GM10248 (cell line): ENCODE measurements at regions of chr3 and their contacts with region 1.

Region 1: DNA sequence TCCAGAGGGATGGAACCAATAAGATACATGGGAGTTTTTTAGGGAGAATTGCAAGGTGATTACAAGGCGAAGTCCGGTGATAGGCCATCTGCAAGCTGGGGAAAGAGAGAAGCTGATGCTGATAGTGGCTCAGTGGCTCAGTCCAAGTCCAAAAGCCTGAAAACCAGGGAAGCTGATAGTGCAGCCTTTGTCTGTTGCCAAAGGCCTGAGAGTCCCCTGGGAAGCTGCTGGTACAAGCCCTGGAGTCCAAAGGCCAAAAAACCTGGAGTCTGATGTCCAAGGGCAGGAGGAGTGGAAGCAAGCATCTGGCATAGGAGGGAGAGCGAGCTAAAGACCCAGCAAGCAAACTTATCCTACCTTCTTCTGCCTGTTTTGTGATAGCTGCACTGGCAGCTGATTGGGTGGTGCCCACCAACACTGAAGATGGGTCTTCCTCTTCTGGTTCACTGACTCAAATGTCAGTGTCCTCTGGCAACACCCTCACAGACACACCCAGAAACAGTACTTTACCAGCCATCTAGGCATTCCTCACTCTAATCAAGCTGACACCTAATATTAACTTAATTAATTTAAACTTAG is 16.7 kb downstream of the TFG start:
- DNase-seq: no peak
- CTCF ChIP-seq: no peak

Region 2: GRCh38 chr3:100697172-100697571 is 28.9 kb before region 1 on chr3:
- CTCF ChIA-PET with region 1: no interaction called
- POLR2A ChIA-PET with region 1: no interaction called
- DNase-seq: no peak
- CTCF ChIP-seq: no peak

Region 3: DNA sequence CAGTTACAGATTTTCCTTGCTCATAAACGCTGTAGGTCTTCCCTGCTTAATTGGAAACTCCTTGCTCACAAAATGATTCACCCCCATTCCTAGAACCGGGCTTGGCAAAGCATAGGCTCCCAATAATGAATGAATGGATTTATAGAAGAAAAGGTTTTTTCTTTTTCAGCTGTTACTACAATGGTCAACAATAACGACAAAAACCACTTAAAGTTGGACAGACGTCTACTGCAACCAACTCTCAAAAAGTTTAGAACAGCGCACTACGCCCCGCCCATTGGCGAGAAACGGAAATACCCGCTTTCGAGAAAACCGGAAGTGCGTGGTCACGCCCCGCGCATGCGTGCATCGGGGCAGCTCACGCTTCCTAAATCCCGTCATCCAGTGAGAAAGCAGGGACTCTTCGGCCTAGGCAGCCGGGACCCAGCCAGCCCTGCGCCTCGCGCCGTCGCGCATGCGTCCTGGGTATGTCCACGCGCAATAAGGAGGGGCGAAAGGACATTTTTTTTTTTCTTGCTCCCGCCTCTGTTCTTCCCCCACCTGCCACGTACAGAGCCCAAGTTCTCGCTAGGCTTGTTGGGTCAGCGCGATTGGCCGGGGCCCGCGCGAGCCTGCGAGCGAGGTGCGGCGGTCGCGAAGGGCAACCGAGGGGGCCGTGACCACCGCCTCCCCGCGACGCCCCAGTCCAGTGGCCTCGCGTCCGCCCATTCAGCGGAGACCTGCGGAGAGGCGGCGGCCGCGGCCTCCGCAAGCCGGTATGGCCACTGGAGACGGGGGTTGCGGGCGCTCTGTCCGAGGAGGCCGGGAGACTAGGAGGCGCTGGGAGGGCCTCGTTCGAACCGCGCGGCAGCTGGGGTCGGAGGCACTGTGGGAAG is 16.8 kb before region 1 on chr3 and contains the start of gene TFG:
- CTCF ChIA-PET with region 1: interaction called, 11 read pairs
- POLR2A ChIA-PET with region 1: interaction called, 4 read pairs
- DNase-seq: peak; percentile 99
- CTCF ChIP-seq: no peak

Region 4: DNA sequence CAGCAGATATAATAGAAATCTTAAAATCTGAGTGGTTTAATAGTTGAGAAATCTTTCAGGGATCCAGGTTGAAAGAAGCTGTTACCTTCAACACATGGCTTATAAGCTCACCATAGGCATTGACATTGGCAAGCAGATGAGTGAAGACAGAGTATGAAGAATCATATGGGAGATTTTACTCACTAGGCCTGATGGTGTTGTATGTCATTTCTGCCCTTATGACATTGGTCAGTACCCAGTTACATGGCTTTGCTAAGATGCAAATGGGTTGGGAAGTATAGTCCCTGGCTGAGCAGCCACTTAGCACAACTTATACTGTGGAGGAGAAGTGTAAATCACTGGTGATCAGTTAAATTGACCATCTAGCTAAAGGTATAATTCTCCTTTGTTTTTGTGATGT is 10.8 kb before region 1 on chr3:
- CTCF ChIA-PET with region 1: interaction called, 11 read pairs
- POLR2A ChIA-PET with region 1: interaction called, 4 read pairs
- DNase-seq: no peak
- CTCF ChIP-seq: no peak

Region 5: DNA sequence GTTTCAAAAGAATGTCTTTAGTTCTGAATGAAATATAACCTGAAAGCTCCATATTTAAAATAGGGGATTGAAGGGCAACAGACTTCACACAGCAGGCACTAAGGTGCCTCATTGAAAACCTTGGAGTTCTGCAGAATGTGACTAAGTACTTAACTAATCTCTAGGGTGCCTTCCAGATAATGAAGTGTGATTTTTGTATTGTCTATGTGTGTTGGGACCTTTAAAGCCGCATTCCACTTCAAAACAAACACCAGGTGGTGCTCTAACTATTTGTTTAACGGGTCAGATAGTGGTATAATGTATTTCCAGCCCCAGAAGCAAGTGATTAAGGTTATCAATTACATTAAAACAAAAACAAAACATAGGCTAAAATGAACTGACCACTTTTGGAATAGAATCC is 11.3 kb after region 1 on chr3:
- CTCF ChIA-PET with region 1: interaction called, 73 read pairs
- POLR2A ChIA-PET with region 1: no interaction called
- DNase-seq: no peak
- CTCF ChIP-seq: no peak

Region 6: GRCh38 chr3:101010296-101010695 is 284.3 kb after region 1 on chr3:
- CTCF ChIA-PET with region 1: no interaction called
- POLR2A ChIA-PET with region 1: no interaction called
- DNase-seq: no peak
- CTCF ChIP-seq: no peak